ENCODE measurements at regions of chr2 and their contacts with region 1.

Region 1: GRCh38 chr2:191811807-191812602 is 34.9 kb downstream of the CAVIN2 start:
- DNase-seq: no peak
- H3K4me3 Mint-ChIP-seq: no peak overlapping the region
- H3K27ac Mint-ChIP-seq: no peak overlapping the region
- H3K4me1 Mint-ChIP-seq: no peaks in the 10 kb centered on the region
- H3K27me3 Mint-ChIP-seq: peaks cover 21% of the 10 kb centered on the region

Region 2: GRCh38 chr2:191637182-191638078 is 174.6 kb before region 1 on chr2:
- intact Hi-C with region 1: no loop called
- DNase-seq: no peak
- H3K4me3 Mint-ChIP-seq: peak overlapping the region; percentile 75
- H3K27ac Mint-ChIP-seq: peak overlapping the region; percentile 84
- H3K4me1 Mint-ChIP-seq: peaks cover 56% of the 10 kb centered on the region
- H3K27me3 Mint-ChIP-seq: peaks cover 1% of the 10 kb centered on the region

Region 3: DNA sequence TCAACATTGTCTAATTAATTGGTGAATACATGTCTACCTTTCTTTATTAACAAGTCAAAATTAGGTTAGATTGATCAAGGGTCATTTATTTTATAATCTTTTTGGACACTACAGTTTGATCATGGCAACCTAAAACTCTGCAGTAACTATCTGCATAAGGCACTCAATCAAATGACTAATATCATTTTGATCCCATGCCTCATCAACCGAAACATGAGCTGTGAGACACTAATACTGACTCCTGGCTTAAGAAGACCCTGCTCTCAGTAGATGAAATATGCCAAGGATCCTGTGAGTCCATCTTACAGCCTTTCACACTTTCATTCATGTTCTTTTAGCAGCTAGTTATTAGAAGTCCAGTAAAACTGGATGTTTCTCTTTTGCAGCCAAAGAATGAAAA is 204.3 kb after region 1 on chr2:
- intact Hi-C with region 1: loop called (anchors 10 kb)
- DNase-seq: no peak
- H3K4me3 Mint-ChIP-seq: no peak overlapping the region
- H3K27ac Mint-ChIP-seq: no peak overlapping the region
- H3K4me1 Mint-ChIP-seq: no peaks in the 10 kb centered on the region
- H3K27me3 Mint-ChIP-seq: peaks cover 10% of the 10 kb centered on the region